ENCODE measurements at regions of chr11 and their contacts with region 1.

Region 1: GRCh38 chr11:10933455-10934292 is 75.8 kb upstream of the ZBED5 start:
- DNase-seq: peak; percentile 88
- ATAC-seq: peak; percentile 96
- H3K4me3 ChIP-seq: peak overlapping the region; percentile 38 to 68 (median 58)
- H3K4me3 Mint-ChIP-seq: peak overlapping the region; percentile 79
- H3K27ac ChIP-seq: no peak overlapping the region
- H3K27ac Mint-ChIP-seq: peak overlapping the region; percentile 3
- H3K4me1 ChIP-seq: peaks cover 22 to 24% of the 10 kb centered on the region in 2 donors
- H3K4me1 Mint-ChIP-seq: peaks cover 16% of the 10 kb centered on the region
- H3K27me3 ChIP-seq: peaks cover 0 to 43% (median 27%) of the 10 kb centered on the region in 4 experiments
- H3K27me3 Mint-ChIP-seq: peaks cover 22% of the 10 kb centered on the region
- CTCF ChIP-seq: peak; percentile 97

Region 2: GRCh38 chr11:10792398-10792975 is 141.2 kb before region 1 on chr11:
- CTCF ChIA-PET with region 1: interaction called, 47 read pairs
- POLR2A ChIA-PET with region 1: no interaction called
- intact Hi-C with region 1: loop called (anchors 1 kb)
- DNase-seq: peak; percentile 86
- ATAC-seq: peak; percentile 97
- H3K4me3 ChIP-seq: peak overlapping the region in 2 of 5 experiments; percentile 17 to 32
- H3K4me3 Mint-ChIP-seq: peak overlapping the region; percentile 17
- H3K27ac ChIP-seq: no peak overlapping the region
- H3K27ac Mint-ChIP-seq: no peak overlapping the region
- H3K4me1 ChIP-seq: peaks cover 13 to 20% of the 10 kb centered on the region in 2 donors
- H3K4me1 Mint-ChIP-seq: peaks cover 21% of the 10 kb centered on the region
- H3K27me3 ChIP-seq: no peaks in the 10 kb centered on the region
- H3K27me3 Mint-ChIP-seq: no peaks in the 10 kb centered on the region
- CTCF ChIP-seq: peak; percentile 90

Region 3: DNA sequence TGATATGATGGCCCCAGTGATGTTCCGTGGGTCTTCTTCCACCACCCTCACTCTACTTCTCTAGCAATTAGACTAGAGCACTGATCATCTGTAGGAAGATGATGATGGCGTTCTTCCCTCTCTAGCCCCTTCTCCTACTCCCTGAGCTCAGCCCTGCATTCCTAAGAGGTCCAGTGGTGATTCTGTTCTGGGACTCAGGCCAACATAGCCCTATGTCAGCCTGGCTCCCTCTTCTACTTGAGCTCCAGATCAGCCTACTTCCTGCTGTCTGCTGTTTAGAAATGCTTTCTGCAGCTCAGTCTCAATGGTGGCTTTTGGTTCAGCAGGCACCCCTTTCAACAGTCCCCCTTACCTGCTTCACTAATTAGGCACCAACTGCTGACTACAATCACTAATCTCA is 10.3 kb after region 1 on chr11:
- CTCF ChIA-PET with region 1: interaction called, 40 read pairs
- POLR2A ChIA-PET with region 1: no interaction called
- intact Hi-C with region 1: no loop called
- DNase-seq: no peak
- ATAC-seq: no peak
- H3K4me3 ChIP-seq: no peak overlapping the region
- H3K4me3 Mint-ChIP-seq: no peak overlapping the region
- H3K27ac ChIP-seq: no peak overlapping the region
- H3K27ac Mint-ChIP-seq: no peak overlapping the region
- H3K4me1 ChIP-seq: no peaks in the 10 kb centered on the region
- H3K4me1 Mint-ChIP-seq: no peaks in the 10 kb centered on the region
- H3K27me3 ChIP-seq: no peaks in the 10 kb centered on the region
- H3K27me3 Mint-ChIP-seq: peaks cover 12% of the 10 kb centered on the region
- CTCF ChIP-seq: no peak

Region 4: GRCh38 chr11:11010624-11011127 is 77.0 kb after region 1 on chr11:
- CTCF ChIA-PET with region 1: interaction called, 69 read pairs
- POLR2A ChIA-PET with region 1: no interaction called
- intact Hi-C with region 1: no loop called
- DNase-seq: peak; percentile 31
- ATAC-seq: no peak
- H3K4me3 ChIP-seq: no peak overlapping the region
- H3K4me3 Mint-ChIP-seq: no peak overlapping the region
- H3K27ac ChIP-seq: no peak overlapping the region
- H3K27ac Mint-ChIP-seq: no peak overlapping the region
- H3K4me1 ChIP-seq: peaks cover 24% of the 10 kb centered on the region in 2 donors
- H3K4me1 Mint-ChIP-seq: peaks cover 23% of the 10 kb centered on the region
- H3K27me3 ChIP-seq: peaks cover 0 to 14% (median 6%) of the 10 kb centered on the region in 4 experiments
- H3K27me3 Mint-ChIP-seq: peaks cover 18% of the 10 kb centered on the region
- CTCF ChIP-seq: no peak

Region 5: DNA sequence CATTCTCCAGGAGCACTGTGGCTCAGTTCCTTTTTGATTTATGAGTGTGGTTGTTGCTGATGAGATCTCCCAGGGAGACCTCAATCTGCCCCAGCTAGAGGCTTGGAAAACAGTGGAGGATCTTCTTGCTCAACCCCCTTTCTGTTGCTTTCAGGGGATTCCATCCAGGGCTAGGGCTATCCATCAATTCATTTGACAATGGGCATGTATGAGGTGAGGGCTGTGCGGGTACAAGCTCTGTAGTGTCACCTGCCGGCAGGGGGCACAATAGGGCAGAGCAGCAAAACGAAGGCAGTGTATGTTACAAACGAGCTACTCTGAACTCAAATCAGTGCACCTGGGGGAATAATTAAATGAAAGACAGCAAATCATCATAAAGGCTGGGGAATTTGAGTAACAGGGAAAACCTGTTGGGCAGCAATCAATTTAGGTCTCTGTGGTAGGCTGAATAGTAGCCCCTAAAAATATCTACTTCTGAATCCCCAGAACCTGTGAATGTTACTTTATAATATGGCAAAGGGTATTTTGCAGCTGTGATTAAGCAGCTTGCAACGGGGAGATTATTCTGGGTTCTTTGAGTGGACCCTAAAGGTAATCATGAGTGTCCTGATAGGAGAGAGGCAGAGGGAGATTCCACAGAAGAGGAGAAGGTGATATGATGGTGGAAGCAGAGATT is 94.5 kb after region 1 on chr11:
- CTCF ChIA-PET with region 1: interaction called, 155 read pairs
- POLR2A ChIA-PET with region 1: no interaction called
- intact Hi-C with region 1: no loop called
- DNase-seq: peak; percentile 69
- ATAC-seq: peak; percentile 88
- H3K4me3 ChIP-seq: no peak overlapping the region
- H3K4me3 Mint-ChIP-seq: no peak overlapping the region
- H3K27ac ChIP-seq: no peak overlapping the region
- H3K27ac Mint-ChIP-seq: no peak overlapping the region
- H3K4me1 ChIP-seq: no peaks in the 10 kb centered on the region
- H3K4me1 Mint-ChIP-seq: peaks cover 2% of the 10 kb centered on the region
- H3K27me3 ChIP-seq: peaks cover 0 to 10% (median 6%) of the 10 kb centered on the region in 4 experiments
- H3K27me3 Mint-ChIP-seq: peaks cover 25% of the 10 kb centered on the region
- CTCF ChIP-seq: peak; percentile 93

Region 6: DNA sequence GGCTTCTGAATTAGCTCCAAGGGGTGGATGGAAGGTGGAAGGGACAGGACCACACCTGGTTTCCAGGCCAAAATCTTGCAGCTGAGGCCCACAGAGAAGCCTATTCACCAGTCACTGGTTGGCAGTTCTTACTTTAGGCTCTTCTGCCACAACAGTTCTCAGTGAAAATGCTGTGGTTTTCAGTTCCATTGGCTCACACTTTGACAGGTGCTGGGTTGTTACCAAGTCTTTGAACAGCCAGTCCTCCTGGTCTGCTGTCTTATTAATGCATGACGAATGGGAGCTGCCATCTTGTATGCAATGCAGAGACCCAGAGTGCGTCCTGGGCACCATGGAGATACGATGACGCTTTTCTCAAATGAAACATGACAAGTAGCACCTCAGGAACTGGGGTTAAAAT is 156.1 kb after region 1 on chr11:
- CTCF ChIA-PET with region 1: no interaction called
- POLR2A ChIA-PET with region 1: no interaction called
- intact Hi-C with region 1: no loop called
- DNase-seq: no peak
- ATAC-seq: no peak
- H3K4me3 ChIP-seq: no peak overlapping the region
- H3K4me3 Mint-ChIP-seq: no peak overlapping the region
- H3K27ac ChIP-seq: no peak overlapping the region
- H3K27ac Mint-ChIP-seq: no peak overlapping the region
- H3K4me1 ChIP-seq: no peaks in the 10 kb centered on the region
- H3K4me1 Mint-ChIP-seq: peaks cover 2% of the 10 kb centered on the region
- H3K27me3 ChIP-seq: no peaks in the 10 kb centered on the region
- H3K27me3 Mint-ChIP-seq: peaks cover 13% of the 10 kb centered on the region
- CTCF ChIP-seq: no peak

Region 7: DNA sequence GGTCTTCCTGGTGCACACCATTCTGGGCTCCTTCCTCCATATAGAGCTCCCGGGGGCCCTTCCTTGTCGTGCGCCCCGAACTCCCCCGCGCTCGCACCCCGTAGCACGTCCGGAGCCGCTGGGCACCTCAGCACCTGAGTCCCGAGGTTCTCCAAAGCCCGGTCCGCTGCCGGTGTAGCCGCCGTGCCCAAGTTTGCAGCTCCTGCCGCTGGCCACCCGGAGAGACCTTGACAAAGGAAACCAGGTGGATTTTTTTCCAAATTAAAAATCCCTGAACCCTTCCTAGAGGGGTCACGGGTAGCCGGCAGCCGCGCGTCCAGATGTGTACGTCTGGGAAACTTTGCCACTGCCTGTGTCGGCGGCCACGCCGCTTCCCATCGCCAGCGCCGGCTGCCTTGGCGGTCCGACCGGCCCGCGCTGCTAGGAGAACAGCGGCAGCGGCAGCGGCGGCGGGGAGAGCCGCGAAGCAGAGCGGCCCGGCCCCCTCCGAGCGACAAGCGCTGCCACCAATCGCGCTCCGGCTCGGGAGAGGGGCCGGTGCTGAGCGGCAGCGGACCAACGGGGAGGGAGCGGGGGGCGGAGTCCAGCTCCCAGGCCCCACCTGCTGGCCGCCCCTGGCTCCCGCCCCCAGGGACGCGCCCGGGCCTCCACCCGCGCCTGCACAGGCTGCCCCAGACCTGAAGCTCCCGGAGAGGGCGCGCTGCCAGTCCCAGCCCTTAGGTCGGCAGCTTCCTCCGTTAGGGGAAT is 688.1 kb after region 1 on chr11 and contains the start of gene GALNT18:
- CTCF ChIA-PET with region 1: no interaction called
- POLR2A ChIA-PET with region 1: no interaction called
- intact Hi-C with region 1: loop called (anchors 10 kb)
- DNase-seq: peak; percentile 60
- ATAC-seq: peak; percentile 98
- H3K4me3 ChIP-seq: peak within 1 kb of the TSS in 4 of 5 experiments; percentile 17 to 48 (median 36)
- H3K4me3 Mint-ChIP-seq: peak within 1 kb of the TSS; percentile 80
- H3K27ac ChIP-seq: no peak within 1 kb of the TSS
- H3K27ac Mint-ChIP-seq: no peak within 1 kb of the TSS
- H3K4me1 ChIP-seq: peaks cover 13 to 19% of the 10 kb centered on the region in 2 donors
- H3K4me1 Mint-ChIP-seq: peaks cover 19% of the 10 kb centered on the region
- H3K27me3 ChIP-seq: peaks cover 0 to 46% (median 20%) of the 10 kb centered on the region in 4 experiments
- H3K27me3 Mint-ChIP-seq: peaks cover 61% of the 10 kb centered on the region
- CTCF ChIP-seq: no peak
- total RNA-seq, gene GALNT18: not detected in 2 replicates